Sciatic nerve (tissue), 2 donors: ENCODE measurements at regions of chr10 and their contacts with region 1.

Region 1: DNA sequence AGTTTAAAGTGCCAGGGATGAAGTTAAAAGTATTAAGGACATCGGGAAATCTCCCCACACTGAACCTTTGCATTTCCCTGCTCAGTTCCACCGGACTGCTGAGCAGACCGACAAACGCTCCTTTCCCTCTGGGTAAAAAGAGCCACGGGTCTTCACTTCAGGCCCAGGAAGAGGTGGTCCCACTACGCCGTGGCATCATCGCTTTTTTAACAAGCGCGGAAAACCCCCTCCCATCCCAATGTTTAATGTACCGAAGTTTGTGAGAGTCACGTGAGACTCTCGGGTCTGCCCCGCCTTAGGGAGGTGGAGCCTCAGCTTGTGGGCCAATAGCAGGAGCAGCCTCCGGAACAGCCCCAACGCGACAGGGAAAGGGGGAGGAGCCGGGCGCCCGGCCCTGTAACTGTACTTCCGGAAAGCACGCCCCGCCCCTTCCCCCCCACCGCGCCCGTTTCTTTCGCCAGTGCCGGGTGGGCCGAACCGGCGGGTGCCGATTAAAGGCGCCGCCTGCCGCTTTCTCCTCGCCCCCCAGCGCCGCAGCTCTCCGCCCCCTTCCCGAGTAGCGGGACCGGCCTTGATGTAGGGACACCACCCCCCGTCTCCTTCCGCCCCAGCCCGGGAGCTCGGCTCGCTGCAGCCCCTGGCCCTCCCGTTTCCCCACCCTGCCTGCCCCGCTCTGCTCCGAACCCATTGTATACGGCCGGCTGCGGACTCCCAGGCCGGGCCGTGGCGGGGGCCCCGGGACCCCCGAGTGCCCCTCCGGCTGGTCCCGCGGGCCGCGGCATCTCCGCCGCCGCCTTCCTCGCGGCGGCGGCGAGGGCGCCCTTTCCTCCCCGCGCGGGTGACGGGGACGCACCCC is 2.2 kb upstream of the TRIM8 start:
- DNase-seq: peak; percentile 99
- ATAC-seq: peak; percentile 86

Region 2: GRCh38 chr10:102713814-102714620 is 71.9 kb after region 1 on chr10 and contains the start of gene ARL3:
- intact Hi-C with region 1: loop called (anchors 10 kb)
- DNase-seq: peak; percentile 98
- ATAC-seq: peak; percentile 98
- total RNA-seq, gene ARL3: 17.4 TPM

Region 3: GRCh38 chr10:102869258-102870198 is 227.4 kb after region 1 on chr10 and contains the start of gene AS3MT:
- intact Hi-C with region 1: no loop called
- DNase-seq: peak; percentile 64
- ATAC-seq: peak; percentile 92
- total RNA-seq, gene AS3MT: 0.49 TPM

Region 4: GRCh38 chr10:102888048-102888447 is 245.9 kb after region 1 on chr10:
- intact Hi-C with region 1: no loop called
- DNase-seq: no peak
- ATAC-seq: no peak

Region 5: DNA sequence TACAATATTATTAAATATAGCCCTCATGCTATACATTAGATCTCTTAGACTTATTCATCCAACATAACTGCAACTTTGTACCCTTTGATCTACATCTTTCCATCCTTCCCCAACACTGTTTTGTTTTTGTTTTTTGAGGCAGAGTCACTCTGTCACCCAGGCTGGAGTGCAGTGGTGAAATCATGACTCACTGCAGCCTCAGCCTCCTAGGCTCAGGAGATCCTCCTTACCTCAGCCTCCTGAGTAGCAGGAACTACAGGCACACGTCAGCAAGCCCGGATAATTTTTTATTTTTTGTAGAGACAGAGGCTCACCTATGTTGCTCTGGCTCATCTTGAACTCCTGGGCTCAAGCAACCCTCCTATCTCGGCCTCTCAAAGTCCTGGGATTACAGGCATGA is 497.7 kb after region 1 on chr10:
- intact Hi-C with region 1: no loop called
- DNase-seq: no peak
- ATAC-seq: no peak